Activated CD4-positive, alpha-beta memory T cell treated with anti-CD3 and anti-CD28 coated beads for 36 hours (primary cell): ENCODE measurements at regions of chr7 and their contacts with region 1.

Region 1: GRCh38 chr7:37352974-37353948 is 95.4 kb downstream of the ELMO1 start:
- DNase-seq: peak; percentile 83
- H3K4me3 Mint-ChIP-seq: peak overlapping the region; percentile 92
- H3K27ac Mint-ChIP-seq: peak overlapping the region; percentile 99
- H3K4me1 Mint-ChIP-seq: peaks cover 86% of the 10 kb centered on the region
- H3K27me3 Mint-ChIP-seq: no peaks in the 10 kb centered on the region

Region 2: DNA sequence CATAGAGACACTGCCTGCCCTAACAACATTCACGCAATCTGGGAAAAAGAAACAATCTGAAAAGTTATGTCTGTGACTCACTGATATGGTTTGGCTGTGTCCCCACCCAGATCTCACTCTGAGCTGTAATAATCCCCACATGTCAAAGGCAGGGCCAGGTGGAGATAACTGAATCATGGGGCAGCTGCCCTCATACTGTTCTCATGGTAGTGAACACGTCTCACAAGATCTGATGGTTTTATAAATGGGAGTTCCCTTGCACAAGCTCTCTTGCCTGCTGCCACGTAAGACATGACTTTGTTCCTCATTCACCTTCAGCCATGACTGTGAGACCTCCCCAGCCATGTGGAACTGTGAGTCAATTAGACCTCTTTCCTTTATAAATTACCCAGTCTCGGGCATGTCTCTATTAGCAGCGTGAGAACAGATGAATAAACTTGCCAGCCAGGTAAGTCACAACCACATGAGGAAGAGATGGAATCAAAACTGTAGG is 287.4 kb before region 1 on chr7:
- CTCF ChIA-PET with region 1: no interaction called
- POLR2A ChIA-PET with region 1: no interaction called
- intact Hi-C with region 1: loop called (anchors 10 kb)
- DNase-seq: peak; percentile 68
- H3K4me3 Mint-ChIP-seq: no peak overlapping the region
- H3K27ac Mint-ChIP-seq: peak overlapping the region; percentile 74
- H3K4me1 Mint-ChIP-seq: peaks cover 70% of the 10 kb centered on the region
- H3K27me3 Mint-ChIP-seq: no peaks in the 10 kb centered on the region

Region 3: GRCh38 chr7:37284805-37285231 is 68.4 kb before region 1 on chr7:
- CTCF ChIA-PET with region 1: interaction called, 54 read pairs
- POLR2A ChIA-PET with region 1: no interaction called
- intact Hi-C with region 1: loop called (anchors 1 kb)
- DNase-seq: peak; percentile 57
- H3K4me3 Mint-ChIP-seq: no peak overlapping the region
- H3K27ac Mint-ChIP-seq: no peak overlapping the region
- H3K4me1 Mint-ChIP-seq: peaks cover 45% of the 10 kb centered on the region
- H3K27me3 Mint-ChIP-seq: no peaks in the 10 kb centered on the region

Region 4: DNA sequence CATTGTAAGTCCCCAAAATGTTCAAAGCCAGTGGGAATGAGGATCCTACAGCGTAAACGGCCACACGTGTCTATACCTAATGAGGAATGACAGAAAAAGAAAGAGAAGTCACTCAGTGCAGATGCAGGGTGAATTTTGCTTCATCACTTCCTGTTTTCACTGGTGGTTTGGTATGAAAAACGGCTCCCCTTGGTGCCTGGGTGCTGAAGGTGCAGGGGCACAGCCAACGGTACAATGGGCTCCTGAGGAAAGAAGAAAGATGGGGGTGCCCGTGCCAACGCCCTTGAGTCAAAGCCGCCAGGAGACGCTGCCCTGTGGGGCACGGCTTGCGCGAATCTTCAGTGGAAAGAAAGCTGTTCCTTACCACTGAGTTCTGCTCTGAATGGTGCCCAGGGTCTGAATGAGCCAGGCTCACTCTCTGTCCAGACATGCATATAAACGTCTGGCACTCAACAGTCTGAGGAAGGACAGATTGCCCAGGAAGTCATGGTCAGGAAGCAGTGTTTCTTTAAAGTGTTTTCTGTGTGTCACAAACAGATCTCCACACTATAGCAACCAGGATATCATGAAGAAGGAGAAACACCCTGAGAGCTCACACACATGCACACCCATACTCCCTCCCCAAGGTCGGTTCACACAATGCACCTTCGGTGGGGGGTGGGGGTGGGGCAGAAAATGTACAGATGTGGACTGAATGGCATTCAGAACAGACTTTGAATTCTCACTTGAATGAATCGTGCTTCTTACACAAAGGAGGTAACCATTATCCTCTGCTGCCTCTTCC is 10.4 kb before region 1 on chr7:
- CTCF ChIA-PET with region 1: interaction called, 42 read pairs
- POLR2A ChIA-PET with region 1: interaction called, 36 read pairs
- intact Hi-C with region 1: loop called (anchors 1 kb)
- DNase-seq: peak; percentile 85
- H3K4me3 Mint-ChIP-seq: peak overlapping the region; percentile 96
- H3K27ac Mint-ChIP-seq: peak overlapping the region; percentile 94
- H3K4me1 Mint-ChIP-seq: peaks cover 79% of the 10 kb centered on the region
- H3K27me3 Mint-ChIP-seq: no peaks in the 10 kb centered on the region

Region 5: GRCh38 chr7:37408291-37409228 is 55.3 kb after region 1 on chr7:
- CTCF ChIA-PET with region 1: interaction called, 4 read pairs
- POLR2A ChIA-PET with region 1: interaction called, 13 read pairs
- intact Hi-C with region 1: loop called (anchors 1 kb)
- DNase-seq: peak; percentile 34
- H3K4me3 Mint-ChIP-seq: peak overlapping the region; percentile 70
- H3K27ac Mint-ChIP-seq: peak overlapping the region; percentile 96
- H3K4me1 Mint-ChIP-seq: peaks cover 86% of the 10 kb centered on the region
- H3K27me3 Mint-ChIP-seq: no peaks in the 10 kb centered on the region

Region 6: DNA sequence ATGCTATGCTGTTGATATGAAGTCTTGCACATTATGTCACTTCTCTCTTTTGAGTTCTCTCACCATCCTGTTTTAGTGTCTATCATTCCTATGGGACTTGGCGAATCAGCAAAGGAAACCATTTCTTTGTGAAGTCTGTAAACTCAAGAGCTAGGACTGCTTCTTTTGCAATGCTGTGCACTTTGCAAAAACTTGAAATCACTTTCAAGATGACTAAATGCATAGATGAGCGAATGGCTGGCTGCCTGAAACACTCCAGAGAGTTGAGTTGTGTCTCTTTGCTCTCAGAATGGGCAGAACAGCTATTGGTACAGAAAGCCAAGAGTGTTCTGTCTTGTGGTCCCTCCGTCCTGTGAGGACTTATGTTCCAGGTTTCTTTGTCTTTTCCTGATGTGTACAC is 113.7 kb after region 1 on chr7:
- CTCF ChIA-PET with region 1: no interaction called
- POLR2A ChIA-PET with region 1: no interaction called
- intact Hi-C with region 1: no loop called
- DNase-seq: no peak
- H3K4me3 Mint-ChIP-seq: no peak overlapping the region
- H3K27ac Mint-ChIP-seq: no peak overlapping the region
- H3K4me1 Mint-ChIP-seq: peaks cover 6% of the 10 kb centered on the region
- H3K27me3 Mint-ChIP-seq: peaks cover 4% of the 10 kb centered on the region

Region 7: DNA sequence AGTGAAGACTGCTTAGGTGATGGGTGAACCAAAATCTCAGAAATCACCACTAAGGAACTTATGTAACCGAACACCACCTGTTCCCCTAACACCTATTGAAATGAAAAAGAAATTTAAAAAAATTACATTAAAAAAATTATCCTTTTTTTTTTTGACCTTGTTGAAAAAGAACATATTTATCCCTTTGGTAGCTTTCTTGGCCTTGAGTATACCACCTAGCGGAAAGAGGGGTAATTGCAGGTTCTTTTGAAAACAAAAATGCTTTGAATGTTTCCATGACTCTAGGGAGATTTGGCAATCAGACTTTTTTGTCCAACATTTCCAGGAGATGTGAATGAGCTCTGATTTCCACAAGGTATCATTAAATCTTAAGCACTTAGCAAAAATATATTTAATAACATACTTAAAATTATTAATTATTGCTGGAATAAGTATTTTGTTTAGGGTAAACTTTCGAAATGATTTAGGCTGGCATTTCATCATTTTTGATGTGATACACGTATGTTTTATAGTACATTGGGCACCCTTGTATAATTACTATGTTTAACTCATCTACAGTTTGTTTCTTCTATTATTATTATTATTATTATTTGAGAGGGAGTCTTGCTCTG is 142.4 kb after region 1 on chr7:
- CTCF ChIA-PET with region 1: interaction called, 23 read pairs
- POLR2A ChIA-PET with region 1: no interaction called
- intact Hi-C with region 1: loop called (anchors 2 kb)
- DNase-seq: no peak
- H3K4me3 Mint-ChIP-seq: no peak overlapping the region
- H3K27ac Mint-ChIP-seq: no peak overlapping the region
- H3K4me1 Mint-ChIP-seq: peaks cover 8% of the 10 kb centered on the region
- H3K27me3 Mint-ChIP-seq: no peaks in the 10 kb centered on the region